MCF 10A (cell line): ENCODE measurements at regions of chr6 and their contacts with region 1.

Region 1: DNA sequence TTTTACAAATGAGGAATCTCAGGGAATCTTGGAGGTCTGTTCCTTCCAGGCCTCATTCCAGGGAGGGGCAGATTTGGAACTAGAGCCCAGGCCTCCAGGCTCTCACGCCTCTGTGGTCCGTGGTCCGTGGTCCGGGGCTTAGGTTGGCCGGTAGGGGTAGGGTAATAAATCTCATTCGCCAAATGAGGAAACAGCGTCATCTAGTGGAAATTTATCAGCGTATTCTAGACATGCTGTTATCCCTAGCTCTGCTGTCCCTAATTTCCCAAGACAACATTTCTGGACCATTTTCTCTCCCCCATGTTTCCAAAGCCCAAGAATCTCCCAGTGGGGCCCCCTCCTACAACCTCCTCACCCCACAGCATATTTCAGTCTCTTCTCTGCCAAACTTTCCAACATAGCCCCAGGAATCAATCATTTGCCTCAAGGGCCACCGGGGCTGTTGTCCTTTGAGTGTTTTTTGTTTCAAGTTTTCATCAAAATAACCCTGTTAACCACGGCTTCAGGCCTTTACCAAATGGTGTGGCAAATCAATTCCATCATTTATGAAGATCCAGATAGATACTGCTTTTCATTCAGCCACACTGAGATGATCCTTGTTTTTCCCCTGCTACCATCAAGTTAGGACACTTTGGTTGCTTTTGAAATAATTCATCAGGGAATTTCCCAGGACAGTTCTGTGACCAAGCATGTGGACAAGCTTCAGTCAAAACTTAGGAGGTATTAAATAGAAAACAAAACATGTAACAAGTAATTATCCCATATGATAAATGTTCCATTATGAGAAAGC is 126.8 kb downstream of the ALDH8A1 start:
- DNase-seq: peak; percentile 88
- H3K4me3 Mint-ChIP-seq: no peak overlapping the region
- H3K27ac Mint-ChIP-seq: no peak overlapping the region
- H3K4me1 Mint-ChIP-seq: peaks cover 27% of the 10 kb centered on the region
- H3K27me3 Mint-ChIP-seq: no peaks in the 10 kb centered on the region
- CTCF ChIP-seq: peak; percentile 82

Region 2: GRCh38 chr6:134111062-134111677 is 711.9 kb before region 1 on chr6:
- CTCF ChIA-PET with region 1: interaction called, 14 read pairs
- POLR2A ChIA-PET with region 1: no interaction called
- intact Hi-C with region 1: loop called (anchors 1 kb)
- DNase-seq: peak; percentile 67
- H3K4me3 Mint-ChIP-seq: no peak overlapping the region
- H3K27ac Mint-ChIP-seq: no peak overlapping the region
- H3K4me1 Mint-ChIP-seq: peaks cover 19% of the 10 kb centered on the region
- H3K27me3 Mint-ChIP-seq: no peaks in the 10 kb centered on the region
- CTCF ChIP-seq: peak; percentile 76

Region 3: DNA sequence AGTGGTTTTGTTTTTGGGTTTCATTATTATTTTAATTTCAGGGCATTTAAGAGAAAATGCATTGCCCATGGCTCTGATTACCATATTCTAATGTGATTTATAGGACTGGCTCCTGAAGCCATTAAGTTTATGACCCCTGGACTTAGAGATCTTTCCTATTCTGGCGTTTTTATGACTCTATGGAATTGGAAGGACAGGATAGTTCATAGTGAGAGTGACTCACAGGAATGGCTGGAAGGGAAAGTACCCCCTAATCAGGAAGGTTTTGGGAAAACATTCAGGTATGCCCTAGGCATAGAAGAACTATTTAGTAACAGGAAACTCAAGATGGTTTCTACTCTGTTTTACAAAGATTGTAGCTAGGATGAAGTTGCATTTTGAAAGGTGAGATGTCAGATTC is 662.1 kb before region 1 on chr6:
- CTCF ChIA-PET with region 1: interaction called, 84 read pairs
- POLR2A ChIA-PET with region 1: interaction called, 6 read pairs
- intact Hi-C with region 1: loop called (anchors 1 kb)
- DNase-seq: peak; percentile 46
- H3K4me3 Mint-ChIP-seq: no peak overlapping the region
- H3K27ac Mint-ChIP-seq: no peak overlapping the region
- H3K4me1 Mint-ChIP-seq: peaks cover 6% of the 10 kb centered on the region
- H3K27me3 Mint-ChIP-seq: no peaks in the 10 kb centered on the region
- CTCF ChIP-seq: no peak

Region 4: GRCh38 chr6:134413241-134413643 is 409.9 kb before region 1 on chr6:
- CTCF ChIA-PET with region 1: no interaction called
- POLR2A ChIA-PET with region 1: no interaction called
- intact Hi-C with region 1: no loop called
- DNase-seq: no peak
- H3K4me3 Mint-ChIP-seq: no peak overlapping the region
- H3K27ac Mint-ChIP-seq: no peak overlapping the region
- H3K4me1 Mint-ChIP-seq: no peaks in the 10 kb centered on the region
- H3K27me3 Mint-ChIP-seq: no peaks in the 10 kb centered on the region
- CTCF ChIP-seq: no peak

Region 5: GRCh38 chr6:134436281-134436815 is 386.8 kb before region 1 on chr6:
- CTCF ChIA-PET with region 1: interaction called, 3 read pairs
- POLR2A ChIA-PET with region 1: interaction called, 4 read pairs
- intact Hi-C with region 1: loop called (anchors 2 kb)
- DNase-seq: peak; percentile 94
- H3K4me3 Mint-ChIP-seq: peak overlapping the region; percentile 43
- H3K27ac Mint-ChIP-seq: peak overlapping the region; percentile 88
- H3K4me1 Mint-ChIP-seq: peaks cover 24% of the 10 kb centered on the region
- H3K27me3 Mint-ChIP-seq: no peaks in the 10 kb centered on the region
- CTCF ChIP-seq: no peak

Region 6: DNA sequence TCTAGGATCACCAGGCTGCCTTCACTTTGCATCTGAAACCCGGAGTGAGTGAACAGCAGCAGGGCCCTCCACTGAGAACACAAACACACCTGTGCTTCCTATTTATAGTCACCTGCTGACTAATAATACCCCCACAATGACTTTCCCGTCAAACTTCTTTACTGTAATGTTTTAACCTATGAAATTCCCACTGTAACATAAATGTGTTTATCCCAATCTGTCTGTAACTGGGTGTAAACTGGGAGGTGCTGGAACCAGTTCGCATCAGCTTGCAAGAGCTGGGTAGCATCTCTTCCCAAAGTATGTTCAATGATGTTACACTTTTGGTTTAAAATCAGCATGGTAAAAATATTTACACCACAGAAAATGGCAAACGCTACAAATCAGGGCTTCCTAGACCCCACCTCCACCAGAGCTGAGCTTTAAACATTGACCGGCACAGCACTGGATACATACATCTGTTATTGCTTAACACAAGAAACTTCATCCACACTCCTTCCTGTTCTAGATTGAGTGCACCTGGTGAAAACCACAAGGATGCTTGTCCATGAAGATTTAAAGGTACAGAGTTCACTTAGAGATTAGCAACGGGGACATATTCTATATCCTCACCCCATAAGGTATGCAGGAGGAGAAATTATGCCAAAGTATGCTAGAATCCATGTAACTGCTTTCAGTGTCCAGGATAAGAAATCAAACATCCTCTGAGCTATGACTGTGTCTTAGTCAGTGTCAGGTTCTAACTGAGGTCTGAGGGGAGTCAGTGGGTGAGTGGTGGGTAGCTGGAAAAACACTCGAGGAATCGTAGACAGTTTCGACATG is 47.8 kb after region 1 on chr6:
- CTCF ChIA-PET with region 1: interaction called, 15 read pairs
- POLR2A ChIA-PET with region 1: interaction called, 8 read pairs
- intact Hi-C with region 1: no loop called
- DNase-seq: peak; percentile 77
- H3K4me3 Mint-ChIP-seq: no peak overlapping the region
- H3K27ac Mint-ChIP-seq: no peak overlapping the region
- H3K4me1 Mint-ChIP-seq: peaks cover 10% of the 10 kb centered on the region
- H3K27me3 Mint-ChIP-seq: no peaks in the 10 kb centered on the region
- CTCF ChIP-seq: no peak

Region 7: GRCh38 chr6:134938896-134939295 is 115.8 kb after region 1 on chr6:
- CTCF ChIA-PET with region 1: interaction called, 55 read pairs
- POLR2A ChIA-PET with region 1: interaction called, 26 read pairs
- intact Hi-C with region 1: loop called (anchors 1 kb)
- DNase-seq: no peak
- H3K4me3 Mint-ChIP-seq: no peak overlapping the region
- H3K27ac Mint-ChIP-seq: no peak overlapping the region
- H3K4me1 Mint-ChIP-seq: no peaks in the 10 kb centered on the region
- H3K27me3 Mint-ChIP-seq: no peaks in the 10 kb centered on the region
- CTCF ChIP-seq: no peak

Region 8: DNA sequence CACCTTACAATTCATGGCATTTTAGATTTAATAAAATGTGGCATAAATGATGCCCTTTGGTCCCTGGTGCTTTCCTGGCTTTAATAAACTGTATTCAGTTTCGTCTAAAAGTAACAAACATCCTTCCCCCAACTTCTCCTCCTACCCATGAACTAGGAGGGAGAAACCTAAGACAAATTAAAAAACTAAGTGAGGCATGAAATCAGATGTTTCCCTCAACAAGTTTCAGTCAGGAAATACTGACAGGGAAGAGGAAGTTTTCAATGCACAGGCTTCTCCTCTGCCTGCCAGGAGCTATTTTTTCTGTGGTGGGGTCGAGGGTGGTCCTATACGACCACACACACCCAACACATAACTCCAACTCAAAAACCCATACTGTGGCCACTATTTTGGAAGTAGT is 221.5 kb after region 1 on chr6:
- CTCF ChIA-PET with region 1: no interaction called
- POLR2A ChIA-PET with region 1: no interaction called
- intact Hi-C with region 1: no loop called
- DNase-seq: no peak
- H3K4me3 Mint-ChIP-seq: no peak overlapping the region
- H3K27ac Mint-ChIP-seq: no peak overlapping the region
- H3K4me1 Mint-ChIP-seq: peaks cover 13% of the 10 kb centered on the region
- H3K27me3 Mint-ChIP-seq: no peaks in the 10 kb centered on the region
- CTCF ChIP-seq: no peak